ENCODE measurements at regions of chr1 and their contacts with region 1.

Region 1: DNA sequence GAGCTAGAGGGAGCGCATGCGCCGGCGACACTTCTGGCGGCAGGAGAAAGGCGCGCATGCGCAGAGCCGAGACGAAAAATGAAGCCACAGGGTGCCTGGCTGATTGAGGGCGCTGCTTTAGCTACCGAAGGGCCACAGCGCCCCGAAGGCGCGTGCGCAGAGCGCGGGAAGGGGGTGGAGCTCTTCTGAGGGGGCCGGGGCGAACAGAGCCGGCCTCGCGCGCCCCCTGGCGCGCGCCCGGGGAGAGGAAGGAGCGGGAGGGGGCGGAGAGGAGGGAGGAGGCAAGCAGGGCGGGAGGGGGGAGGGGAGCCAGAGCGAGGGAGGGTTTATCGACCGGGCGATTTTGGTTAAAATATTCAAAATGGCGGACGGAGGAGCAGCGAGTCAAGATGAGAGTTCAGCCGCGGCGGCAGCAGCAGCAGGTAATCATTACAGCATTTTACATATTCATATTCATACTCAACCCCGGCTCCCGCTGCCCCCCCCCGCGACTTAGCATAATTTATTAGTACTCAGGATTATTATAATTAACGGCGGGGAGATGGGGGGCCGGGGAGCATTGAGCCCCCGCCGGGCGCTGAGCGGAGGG is at the start of gene POU2F1:
- DNase-seq: peak; percentile 100
- ATAC-seq: peak; percentile 72
- H3K4me3 ChIP-seq: peak within 1 kb of the TSS; percentile 70 to 99 (median 88)
- H3K4me3 Mint-ChIP-seq: peak within 1 kb of the TSS; percentile 93
- H3K27ac ChIP-seq: peak within 1 kb of the TSS; percentile 92 to 96
- H3K27ac Mint-ChIP-seq: peak within 1 kb of the TSS; percentile 98
- H3K4me1 ChIP-seq: peaks cover 23 to 26% of the 10 kb centered on the region in 2 donors
- H3K4me1 Mint-ChIP-seq: peaks cover 42% of the 10 kb centered on the region
- H3K27me3 ChIP-seq: no peaks in the 10 kb centered on the region
- H3K27me3 Mint-ChIP-seq: no peaks in the 10 kb centered on the region
- CTCF ChIP-seq: peak; percentile 61
- total RNA-seq, gene POU2F1: 47.4 and 48.8 TPM in 2 replicates

Region 2: DNA sequence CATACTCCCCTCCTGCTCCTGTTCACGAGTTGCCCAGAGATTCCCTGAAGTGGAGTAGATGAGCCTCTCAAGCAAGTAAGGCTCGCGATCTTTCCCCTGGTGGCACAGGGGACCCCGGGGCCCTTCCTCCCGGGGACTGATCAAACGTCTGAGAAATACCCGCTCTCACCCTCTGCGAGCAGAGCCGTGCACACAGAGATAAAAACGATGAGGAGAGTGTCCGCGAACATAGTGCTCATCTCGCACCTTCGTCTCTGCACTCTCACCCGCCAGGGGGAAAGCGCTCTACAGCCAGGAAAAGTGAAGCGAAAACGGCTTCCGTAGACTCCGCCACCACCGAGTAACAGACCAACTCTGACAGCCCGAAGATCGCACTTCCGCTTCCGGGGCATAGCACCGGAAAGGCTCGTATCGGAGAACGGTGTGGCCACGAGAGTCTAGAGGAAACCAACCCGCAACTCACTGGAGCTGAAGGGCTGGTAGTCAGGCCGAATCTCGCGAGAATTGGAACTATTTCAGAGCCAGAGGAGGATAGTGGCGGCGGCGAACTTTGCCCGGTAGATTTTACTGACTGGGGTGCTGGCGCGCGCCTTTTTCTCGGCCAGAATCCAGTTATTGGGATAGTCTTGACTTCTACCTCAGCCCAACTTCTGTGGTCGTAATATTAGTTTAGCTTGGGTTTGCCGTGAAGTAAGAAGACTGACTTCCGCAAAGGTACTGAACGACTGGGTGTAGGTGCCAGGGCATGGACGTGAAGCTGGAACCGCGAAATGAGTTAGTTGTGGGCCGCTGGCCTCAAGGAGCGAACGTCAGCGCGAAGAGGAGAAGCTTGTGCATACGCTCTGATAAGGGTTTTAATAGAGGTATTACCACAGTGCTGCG is 1451.9 kb before region 1 on chr1 and contains the start of gene TMCO1:
- CTCF ChIA-PET with region 1: no interaction called
- POLR2A ChIA-PET with region 1: no interaction called
- intact Hi-C with region 1: loop called (anchors 5 kb)
- DNase-seq: peak; percentile 97
- ATAC-seq: peak; percentile 95
- H3K4me3 ChIP-seq: peak within 1 kb of the TSS; percentile 73 to 92 (median 85)
- H3K4me3 Mint-ChIP-seq: peak within 1 kb of the TSS; percentile 98
- H3K27ac ChIP-seq: peak within 1 kb of the TSS; percentile 91 to 94
- H3K27ac Mint-ChIP-seq: peak within 1 kb of the TSS; percentile 97
- H3K4me1 ChIP-seq: peaks cover 20 to 23% of the 10 kb centered on the region in 2 donors
- H3K4me1 Mint-ChIP-seq: peaks cover 52% of the 10 kb centered on the region
- H3K27me3 ChIP-seq: no peaks in the 10 kb centered on the region
- H3K27me3 Mint-ChIP-seq: no peaks in the 10 kb centered on the region
- CTCF ChIP-seq: peak; percentile 23
- total RNA-seq, gene TMCO1: 34.8 and 39.5 TPM in 2 replicates

Region 3: GRCh38 chr1:167059045-167059808 is 161.4 kb before region 1 on chr1:
- CTCF ChIA-PET with region 1: interaction called, 15 read pairs
- POLR2A ChIA-PET with region 1: no interaction called
- intact Hi-C with region 1: no loop called
- DNase-seq: peak; percentile 79
- ATAC-seq: peak; percentile 79
- H3K4me3 ChIP-seq: no peak overlapping the region
- H3K4me3 Mint-ChIP-seq: no peak overlapping the region
- H3K27ac ChIP-seq: no peak overlapping the region
- H3K27ac Mint-ChIP-seq: no peak overlapping the region
- H3K4me1 ChIP-seq: peaks cover 3 to 6% of the 10 kb centered on the region in 2 donors
- H3K4me1 Mint-ChIP-seq: peaks cover 4% of the 10 kb centered on the region
- H3K27me3 ChIP-seq: peaks cover 0 to 10% (median 0%) of the 10 kb centered on the region in 4 experiments
- H3K27me3 Mint-ChIP-seq: peaks cover 3% of the 10 kb centered on the region
- CTCF ChIP-seq: peak; percentile 99

Region 4: GRCh38 chr1:167328816-167329483 is 108.3 kb after region 1 on chr1:
- CTCF ChIA-PET with region 1: interaction called, 3 read pairs
- POLR2A ChIA-PET with region 1: interaction called, 13 read pairs
- intact Hi-C with region 1: loop called (anchors 1 kb)
- DNase-seq: peak; percentile 88
- ATAC-seq: peak; percentile 86
- H3K4me3 ChIP-seq: peak overlapping the region; percentile 46 to 67 (median 62)
- H3K4me3 Mint-ChIP-seq: peak overlapping the region; percentile 78
- H3K27ac ChIP-seq: peak overlapping the region; percentile 85 to 86
- H3K27ac Mint-ChIP-seq: peak overlapping the region; percentile 91
- H3K4me1 ChIP-seq: peaks cover 36 to 54% of the 10 kb centered on the region in 2 donors
- H3K4me1 Mint-ChIP-seq: peaks cover 59% of the 10 kb centered on the region
- H3K27me3 ChIP-seq: no peaks in the 10 kb centered on the region
- H3K27me3 Mint-ChIP-seq: no peaks in the 10 kb centered on the region
- CTCF ChIP-seq: no peak

Region 5: DNA sequence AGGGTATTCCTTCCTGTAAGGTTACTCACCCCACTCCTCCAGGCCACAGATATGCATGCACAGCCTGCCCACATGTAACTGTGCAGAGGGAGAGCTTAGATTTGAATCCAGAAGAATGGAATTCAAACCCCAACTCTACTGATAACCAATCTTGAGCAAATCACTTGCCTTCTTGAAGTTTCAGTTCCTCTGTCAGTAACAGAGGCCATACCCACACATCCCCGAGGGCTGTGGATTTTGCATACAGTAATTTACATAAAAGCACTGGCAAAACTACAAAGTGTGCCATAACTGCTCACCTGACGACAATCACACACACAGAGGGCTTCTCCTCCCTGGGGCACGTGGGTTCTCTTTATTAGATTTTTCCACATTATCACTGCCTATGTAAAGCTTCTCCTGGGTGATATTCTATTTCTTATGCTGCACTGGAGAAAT is 279.1 kb after region 1 on chr1:
- CTCF ChIA-PET with region 1: no interaction called
- POLR2A ChIA-PET with region 1: no interaction called
- intact Hi-C with region 1: loop called (anchors 1 kb)
- DNase-seq: peak; percentile 88
- ATAC-seq: peak; percentile 98
- H3K4me3 ChIP-seq: peak overlapping the region in 1 of 5 experiments; percentile 34
- H3K4me3 Mint-ChIP-seq: peak overlapping the region; percentile 68
- H3K27ac ChIP-seq: no peak overlapping the region
- H3K27ac Mint-ChIP-seq: peak overlapping the region; percentile 18
- H3K4me1 ChIP-seq: peaks cover 39% of the 10 kb centered on the region in 2 donors
- H3K4me1 Mint-ChIP-seq: peaks cover 39% of the 10 kb centered on the region
- H3K27me3 ChIP-seq: peaks cover 0 to 66% (median 55%) of the 10 kb centered on the region in 4 experiments
- H3K27me3 Mint-ChIP-seq: peaks cover 75% of the 10 kb centered on the region
- CTCF ChIP-seq: no peak

Region 6: DNA sequence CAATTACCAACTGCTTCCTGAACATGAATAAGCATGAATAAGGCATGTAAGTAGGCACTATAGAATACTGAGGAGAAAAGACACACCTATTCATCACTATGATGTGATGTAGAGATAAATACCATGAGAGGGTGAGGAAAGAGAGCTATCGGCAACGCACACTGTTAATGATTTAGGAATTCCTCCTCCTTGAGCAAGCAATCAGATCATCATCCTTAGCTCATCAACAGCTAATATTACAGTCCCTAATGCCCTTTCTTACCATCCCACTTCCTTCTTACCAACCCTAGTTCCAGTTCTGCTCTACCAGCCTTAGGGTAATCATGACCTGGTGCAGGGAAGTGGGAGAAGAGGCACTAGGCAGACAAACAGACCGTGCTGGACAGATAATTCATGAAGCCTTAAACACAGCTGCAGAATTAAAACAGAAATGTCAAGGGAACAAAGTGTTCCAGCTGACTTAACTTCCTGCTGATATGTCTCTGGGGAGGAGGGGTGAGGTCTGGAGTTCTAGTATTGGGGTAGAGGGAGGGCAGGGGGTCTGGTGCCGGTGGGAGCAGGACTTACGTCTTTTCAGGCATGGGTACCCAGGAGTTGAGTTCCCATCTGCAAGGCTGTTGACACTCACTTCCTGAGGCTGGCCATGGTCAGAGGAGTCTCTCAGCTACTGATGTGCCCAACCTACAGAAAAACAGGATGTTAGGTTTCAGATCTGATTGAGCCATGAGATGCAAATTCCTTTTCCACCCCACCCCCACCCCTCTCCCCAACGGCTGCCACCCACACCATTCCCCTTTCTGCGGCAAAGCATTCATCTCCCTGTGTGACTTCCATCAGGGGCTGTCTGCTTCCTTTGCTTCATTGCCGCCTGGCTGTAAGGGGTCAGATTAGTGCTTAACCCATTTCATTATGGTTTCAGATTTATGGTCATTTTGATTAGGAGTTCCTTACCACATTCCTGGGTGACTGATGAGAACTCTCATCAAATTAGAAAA is 396.8 kb after region 1 on chr1:
- CTCF ChIA-PET with region 1: interaction called, 3 read pairs
- POLR2A ChIA-PET with region 1: no interaction called
- intact Hi-C with region 1: loop called (anchors 1 kb)
- DNase-seq: peak; percentile 94
- ATAC-seq: peak; percentile 90
- H3K4me3 ChIP-seq: peak overlapping the region; percentile 42 to 81 (median 58)
- H3K4me3 Mint-ChIP-seq: peak overlapping the region; percentile 84
- H3K27ac ChIP-seq: peak overlapping the region; percentile 89 to 97
- H3K27ac Mint-ChIP-seq: peak overlapping the region; percentile 92
- H3K4me1 ChIP-seq: peaks cover 87 to 92% of the 10 kb centered on the region in 2 donors
- H3K4me1 Mint-ChIP-seq: peaks cover 86% of the 10 kb centered on the region
- H3K27me3 ChIP-seq: no peaks in the 10 kb centered on the region
- H3K27me3 Mint-ChIP-seq: no peaks in the 10 kb centered on the region
- CTCF ChIP-seq: no peak